K562 (cell line): ENCODE measurements at regions of chr11 and their contacts with region 1.

Region 1: DNA sequence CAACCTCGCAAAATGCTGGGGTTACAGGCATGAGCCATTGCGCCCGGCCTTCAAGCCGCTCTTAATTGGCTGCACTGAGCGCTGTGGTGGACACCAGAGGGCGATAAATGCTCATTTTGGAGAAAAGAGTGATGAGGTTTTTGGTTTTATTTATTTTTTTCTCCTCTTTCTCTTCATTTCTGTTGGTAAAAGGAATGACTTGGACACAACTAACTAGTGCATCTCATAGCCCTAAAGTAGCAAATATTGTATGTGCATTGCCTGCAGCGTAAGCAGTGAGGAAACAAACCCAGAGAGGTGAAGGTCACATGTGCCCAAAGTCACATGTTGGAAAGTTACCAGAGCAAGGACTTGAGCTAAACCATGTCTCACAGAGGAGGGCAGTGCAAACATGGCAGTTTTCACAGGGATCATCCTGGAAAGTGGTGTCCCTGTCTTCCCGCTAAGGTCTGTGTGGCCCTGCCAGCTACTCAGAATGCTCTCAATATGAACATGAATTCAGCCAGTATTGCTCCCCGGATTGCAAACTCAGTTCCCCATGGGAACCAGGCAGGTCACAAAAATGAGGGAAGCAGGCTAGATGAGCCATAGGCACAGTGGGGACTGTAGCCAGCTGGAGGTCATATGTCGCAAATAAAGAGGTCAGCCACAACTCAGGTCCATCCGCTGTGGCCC is 8.6 kb upstream of the CD82 start:
- DNase-seq: peak in 2 of 4 experiments; percentile 35 to 78
- ATAC-seq: peak; percentile 92
- H3K4me3 ChIP-seq: no peak overlapping the region
- H3K27ac ChIP-seq: no peak overlapping the region
- H3K4me1 ChIP-seq: peaks cover 8 to 30% of the 10 kb centered on the region in 2 experiments; a peak in 4 of 5 replicates
- H3K27me3 ChIP-seq: no peaks in the 10 kb centered on the region
- CTCF ChIP-seq: peak; percentile 72 to 89 (median 80)
- EP300 ChIP-seq: no peak
- POLR2A ChIP-seq: no peak
- RAD21 ChIP-seq: peak; percentile 96 to 97

Region 2: GRCh38 chr11:43687120-43687791 is 869.6 kb before region 1 on chr11:
- CTCF ChIA-PET with region 1: no interaction called
- POLR2A ChIA-PET with region 1: no interaction called
- in situ Hi-C with region 1: no loop called
- intact Hi-C with region 1: no loop called
- DNase-seq: no peak
- ATAC-seq: peak; percentile 34
- H3K4me3 ChIP-seq: no peak overlapping the region
- H3K27ac ChIP-seq: peak overlapping the region; percentile 20; the same call in 1 of the 3 replicates
- H3K4me1 ChIP-seq: peaks cover 8 to 49% of the 10 kb centered on the region in 2 experiments
- H3K27me3 ChIP-seq: no peaks in the 10 kb centered on the region
- CTCF ChIP-seq: no peak
- EP300 ChIP-seq: no peak
- POLR2A ChIP-seq: no peak
- RAD21 ChIP-seq: no peak

Region 3: DNA sequence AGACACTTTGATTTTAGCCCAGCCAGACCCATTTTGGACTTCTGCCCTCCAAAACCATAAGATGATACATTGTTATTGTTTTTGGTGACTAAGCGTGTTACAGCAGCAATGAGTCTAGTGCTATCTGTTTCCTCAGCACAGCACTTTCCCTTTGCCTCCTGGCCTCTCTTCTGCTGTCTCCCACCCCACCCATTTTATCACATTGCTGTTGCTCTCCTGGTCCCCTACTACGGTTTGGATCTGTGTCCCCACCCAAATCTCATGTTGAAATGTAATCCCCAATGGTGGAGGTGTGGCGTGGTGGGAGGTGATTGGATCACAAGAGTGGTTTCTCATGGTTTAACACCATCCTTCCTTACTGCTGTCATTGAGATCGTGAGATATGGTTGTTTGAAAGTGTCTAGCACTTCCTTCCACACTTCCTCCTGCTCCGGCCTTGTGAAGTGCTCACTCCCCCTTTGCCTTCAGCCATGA is 51.3 kb before region 1 on chr11:
- CTCF ChIA-PET with region 1: no interaction called
- POLR2A ChIA-PET with region 1: no interaction called
- in situ Hi-C with region 1: no loop called
- intact Hi-C with region 1: no loop called
- DNase-seq: peak in 2 of 4 experiments; percentile 55 to 66
- ATAC-seq: peak; percentile 80
- H3K4me3 ChIP-seq: no peak overlapping the region
- H3K27ac ChIP-seq: peak overlapping the region; percentile 53; the same call in 2 of the 3 replicates
- H3K4me1 ChIP-seq: peaks cover 7 to 17% of the 10 kb centered on the region in 2 experiments; a peak in 4 of 5 replicates
- H3K27me3 ChIP-seq: no peaks in the 10 kb centered on the region
- CTCF ChIP-seq: no peak
- EP300 ChIP-seq: peak; percentile 29; the same call in 1 of the 2 replicates
- POLR2A ChIP-seq: no peak
- RAD21 ChIP-seq: no peak

Region 4: GRCh38 chr11:44893846-44894617 is 337.2 kb after region 1 on chr11:
- CTCF ChIA-PET with region 1: no interaction called
- POLR2A ChIA-PET with region 1: no interaction called
- in situ Hi-C with region 1: no loop called
- intact Hi-C with region 1: loop called (anchors 5 kb)
- DNase-seq: peak; percentile 68 to 85 (median 78)
- ATAC-seq: peak; percentile 99
- H3K4me3 ChIP-seq: no peak overlapping the region
- H3K27ac ChIP-seq: no peak overlapping the region
- H3K4me1 ChIP-seq: peaks cover 0 to 4% of the 10 kb centered on the region in 2 experiments; a peak in 1 of 5 replicates
- H3K27me3 ChIP-seq: peaks cover 0 to 37% of the 10 kb centered on the region in 2 experiments; a peak in 4 of 5 replicates
- CTCF ChIP-seq: peak; percentile 90 to 92 (median 91)
- EP300 ChIP-seq: no peak
- POLR2A ChIP-seq: no peak
- RAD21 ChIP-seq: peak; percentile 84 to 92

Region 5: DNA sequence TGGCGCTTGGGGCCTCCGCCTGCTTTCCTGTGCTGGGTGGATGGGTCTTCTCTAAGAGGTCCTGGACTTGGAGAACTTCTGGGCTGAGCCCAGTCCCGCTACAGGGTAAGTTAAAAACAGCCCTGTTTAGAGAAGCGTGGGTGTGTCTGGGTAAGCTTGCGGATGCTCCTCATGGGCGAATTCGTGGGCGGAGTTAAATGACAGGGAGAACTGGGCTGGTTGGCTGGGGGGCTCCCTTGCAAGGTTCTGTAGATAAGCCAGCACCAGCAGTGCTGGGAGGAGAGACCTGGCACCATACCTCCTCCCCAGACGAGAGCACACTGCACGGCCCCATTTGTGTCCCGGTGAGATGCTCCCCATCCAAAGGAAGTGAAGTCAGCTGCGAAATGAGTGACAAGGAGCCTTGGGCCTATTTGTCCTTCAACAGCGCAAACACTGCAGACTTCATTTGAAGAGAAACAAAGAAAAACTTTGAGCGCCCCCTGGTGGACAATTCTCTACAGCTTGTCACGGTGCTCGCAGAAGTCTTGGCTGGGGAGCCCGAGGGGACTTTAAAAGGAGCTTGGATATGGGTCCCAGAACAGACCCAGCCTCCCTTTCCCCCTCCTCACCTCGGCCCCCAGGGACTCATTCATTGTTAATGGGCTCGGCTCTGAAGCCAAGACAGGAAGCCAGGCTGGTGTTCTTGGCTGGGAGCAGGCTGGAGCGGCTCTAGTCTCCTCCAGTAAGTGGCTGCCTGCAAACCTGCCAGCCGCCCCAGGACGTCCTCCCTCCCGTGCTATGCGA is 354.4 kb after region 1 on chr11:
- CTCF ChIA-PET with region 1: interaction called, 5 read pairs
- POLR2A ChIA-PET with region 1: interaction called, 3 read pairs
- in situ Hi-C with region 1: loop called (anchors 5 kb)
- intact Hi-C with region 1: loop called (anchors 5 kb)
- DNase-seq: peak; percentile 72 to 86 (median 76)
- ATAC-seq: peak; percentile 95
- H3K4me3 ChIP-seq: no peak overlapping the region
- H3K27ac ChIP-seq: no peak overlapping the region
- H3K4me1 ChIP-seq: peaks cover 4 to 17% of the 10 kb centered on the region in 2 experiments; a peak in 4 of 5 replicates
- H3K27me3 ChIP-seq: peaks cover 8 to 51% of the 10 kb centered on the region in 2 experiments; a peak in 4 of 5 replicates
- CTCF ChIP-seq: peak; percentile 70 to 85 (median 79)
- EP300 ChIP-seq: no peak
- POLR2A ChIP-seq: no peak
- RAD21 ChIP-seq: peak; percentile 80 to 81

Region 6: DNA sequence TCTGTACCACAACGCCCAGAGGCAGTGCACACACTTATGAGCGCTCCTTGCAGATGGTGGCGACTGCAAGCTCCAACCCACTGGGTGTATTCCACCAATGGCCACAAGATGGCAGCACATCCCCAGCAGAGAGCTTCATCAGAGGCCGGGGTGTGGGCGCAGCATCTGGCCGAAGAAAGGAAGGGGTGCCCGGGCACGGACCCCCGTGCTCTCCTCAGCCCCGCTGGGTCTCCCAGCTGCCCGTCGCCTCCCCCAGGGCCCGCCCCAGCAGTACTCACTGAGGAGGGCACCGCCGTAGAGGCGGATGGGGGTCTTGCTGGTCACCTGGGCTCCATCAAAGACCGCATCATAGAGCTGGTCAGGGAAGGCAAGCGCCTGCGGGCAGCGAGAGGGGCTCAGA is 379.7 kb after region 1 on chr11:
- CTCF ChIA-PET with region 1: no interaction called
- POLR2A ChIA-PET with region 1: no interaction called
- in situ Hi-C with region 1: no loop called
- intact Hi-C with region 1: no loop called
- DNase-seq: peak; percentile 75 to 83 (median 82)
- ATAC-seq: peak; percentile 92
- H3K4me3 ChIP-seq: no peak overlapping the region
- H3K27ac ChIP-seq: no peak overlapping the region
- H3K4me1 ChIP-seq: peaks cover 0 to 11% of the 10 kb centered on the region in 2 experiments; a peak in 1 of 5 replicates
- H3K27me3 ChIP-seq: peaks cover 0 to 23% of the 10 kb centered on the region in 2 experiments; a peak in 2 of 5 replicates
- CTCF ChIP-seq: peak; percentile 85 to 95 (median 91)
- EP300 ChIP-seq: no peak
- POLR2A ChIP-seq: no peak
- RAD21 ChIP-seq: peak; percentile 91 to 93